ENCODE measurements at regions of chr6 and their contacts with region 1.

Region 1: GRCh38 chr6:31546962-31547726 is at the start of gene NFKBIL1:
- DNase-seq: peak; percentile 92 to 100 (median 94)
- ATAC-seq: peak; percentile 93
- H3K4me3 ChIP-seq: peak within 1 kb of the TSS; percentile 52
- H3K27ac ChIP-seq: peak within 1 kb of the TSS; percentile 81
- H3K4me1 ChIP-seq: peaks cover 10 to 14% of the 10 kb centered on the region in 2 experiments; a peak in 4 of 5 replicates
- H3K27me3 ChIP-seq: no peaks in the 10 kb centered on the region
- CTCF ChIP-seq: no peak; a peak in 1 of 6 replicates
- EP300 ChIP-seq: peak; percentile 37; the same call in 1 of the 2 replicates
- POLR2A ChIP-seq: peak; percentile 71
- RAD21 ChIP-seq: peak in 1 of 2 experiments; percentile 14; a peak in 1 of 4 replicates
- polyA plus RNA-seq, gene NFKBIL1: 0.49 to 0.59 TPM

Region 2: DNA sequence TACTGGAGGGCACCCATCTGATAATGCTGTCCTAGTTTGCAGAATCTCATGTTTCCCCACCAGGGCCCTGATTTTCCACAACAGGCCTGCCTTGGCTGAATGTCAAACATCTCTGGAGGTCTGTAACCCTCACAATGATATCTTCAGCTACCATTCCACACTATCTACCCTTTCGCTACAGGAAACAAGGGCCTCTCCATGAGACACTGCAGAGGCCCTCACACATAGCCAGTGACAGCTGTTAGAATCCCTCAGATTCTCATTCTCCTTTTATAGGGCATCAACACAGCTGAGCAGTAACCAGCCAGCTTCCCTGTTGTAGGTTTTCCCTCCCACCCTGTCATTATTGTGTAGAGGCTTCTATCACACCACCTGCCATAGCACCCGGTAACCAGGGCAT is 78.8 kb before region 1 on chr6:
- CTCF ChIA-PET with region 1: no interaction called
- POLR2A ChIA-PET with region 1: no interaction called
- in situ Hi-C with region 1: no loop called
- intact Hi-C with region 1: no loop called
- DNase-seq: no peak
- ATAC-seq: no peak
- H3K4me3 ChIP-seq: no peak overlapping the region
- H3K27ac ChIP-seq: no peak overlapping the region
- H3K4me1 ChIP-seq: no peaks in the 10 kb centered on the region
- H3K27me3 ChIP-seq: peaks cover 28 to 66% of the 10 kb centered on the region in 2 experiments; a peak in 4 of 5 replicates
- CTCF ChIP-seq: no peak
- EP300 ChIP-seq: no peak
- POLR2A ChIP-seq: no peak
- RAD21 ChIP-seq: no peak

Region 3: GRCh38 chr6:31479933-31480535 is 67.1 kb before region 1 on chr6:
- CTCF ChIA-PET with region 1: no interaction called
- POLR2A ChIA-PET with region 1: no interaction called
- in situ Hi-C with region 1: no loop called
- intact Hi-C with region 1: no loop called
- DNase-seq: no peak
- ATAC-seq: no peak
- H3K4me3 ChIP-seq: no peak overlapping the region
- H3K27ac ChIP-seq: no peak overlapping the region
- H3K4me1 ChIP-seq: no peaks in the 10 kb centered on the region; a peak in 1 of 5 replicates
- H3K27me3 ChIP-seq: peaks cover 30 to 50% of the 10 kb centered on the region in 2 experiments; a peak in 4 of 5 replicates
- CTCF ChIP-seq: no peak
- EP300 ChIP-seq: no peak
- POLR2A ChIP-seq: no peak
- RAD21 ChIP-seq: no peak

Region 4: DNA sequence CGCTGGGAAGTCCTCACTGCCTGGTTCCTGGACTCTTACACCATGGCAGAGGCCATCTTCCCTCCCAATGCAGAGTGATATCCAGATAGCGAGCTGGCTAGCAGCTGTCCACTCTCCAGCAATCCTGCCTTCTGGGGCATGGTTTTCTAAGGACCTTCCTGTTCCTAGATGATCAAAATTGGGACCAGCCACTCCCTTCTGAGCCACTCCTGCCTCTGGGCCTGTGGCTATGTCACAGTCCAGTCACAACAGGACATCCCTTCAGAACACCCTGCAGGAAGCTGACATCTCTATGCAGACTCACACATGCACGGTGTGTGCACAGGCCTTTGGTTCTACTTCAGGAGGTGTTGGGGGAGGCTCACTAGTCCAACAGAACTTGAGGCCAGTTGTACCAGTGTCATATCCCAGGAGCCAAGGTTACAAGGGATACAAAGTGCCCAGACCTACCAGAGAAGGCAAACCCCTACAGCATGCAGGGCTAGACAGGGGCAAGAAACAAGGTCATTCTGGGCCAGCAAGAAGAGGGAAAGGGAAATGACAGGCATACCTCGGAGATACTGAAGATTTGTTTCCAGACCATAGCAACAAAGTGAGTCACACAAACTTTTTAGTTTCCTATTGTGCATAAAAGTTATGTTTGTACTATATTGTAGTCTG is 21.1 kb before region 1 on chr6:
- CTCF ChIA-PET with region 1: no interaction called
- POLR2A ChIA-PET with region 1: interaction called, 27 read pairs
- in situ Hi-C with region 1: no loop called
- intact Hi-C with region 1: no loop called
- DNase-seq: peak in 3 of 4 experiments; percentile 45 to 62 (median 56)
- ATAC-seq: peak; percentile 38
- H3K4me3 ChIP-seq: no peak overlapping the region
- H3K27ac ChIP-seq: peak overlapping the region; percentile 66; the same call in 2 of the 3 replicates
- H3K4me1 ChIP-seq: peaks cover 10 to 20% of the 10 kb centered on the region in 2 experiments
- H3K27me3 ChIP-seq: no peaks in the 10 kb centered on the region
- CTCF ChIP-seq: no peak
- EP300 ChIP-seq: no peak
- POLR2A ChIP-seq: no peak
- RAD21 ChIP-seq: no peak

Region 5: GRCh38 chr6:31559958-31560696 is 13.0 kb after region 1 on chr6:
- CTCF ChIA-PET with region 1: no interaction called
- POLR2A ChIA-PET with region 1: interaction called, 38 read pairs
- in situ Hi-C with region 1: no loop called
- intact Hi-C with region 1: no loop called
- DNase-seq: peak; percentile 66 to 92 (median 76)
- ATAC-seq: peak; percentile 79
- H3K4me3 ChIP-seq: no peak overlapping the region
- H3K27ac ChIP-seq: peak overlapping the region; percentile 41
- H3K4me1 ChIP-seq: peaks cover 47 to 64% of the 10 kb centered on the region in 2 experiments
- H3K27me3 ChIP-seq: no peaks in the 10 kb centered on the region
- CTCF ChIP-seq: peak in 2 of 3 experiments; percentile 23 to 34; a peak in 2 of 6 replicates
- EP300 ChIP-seq: peak; percentile 83
- POLR2A ChIP-seq: no peak
- RAD21 ChIP-seq: peak in 1 of 2 experiments; percentile 16; a peak in 1 of 4 replicates

Region 6: GRCh38 chr6:31580807-31581433 is 33.8 kb after region 1 on chr6:
- CTCF ChIA-PET with region 1: interaction called, 4 read pairs
- POLR2A ChIA-PET with region 1: interaction called, 20 read pairs
- in situ Hi-C with region 1: no loop called
- intact Hi-C with region 1: loop called (anchors 2 kb)
- DNase-seq: peak; percentile 93 to 98 (median 97)
- ATAC-seq: peak; percentile 98
- H3K4me3 ChIP-seq: peak overlapping the region; percentile 62
- H3K27ac ChIP-seq: peak overlapping the region; percentile 45; the same call in 1 of the 3 replicates
- H3K4me1 ChIP-seq: peaks cover 3 to 24% of the 10 kb centered on the region in 2 experiments; a peak in 4 of 5 replicates
- H3K27me3 ChIP-seq: no peaks in the 10 kb centered on the region
- CTCF ChIP-seq: peak; percentile 98 to 99 (median 98)
- EP300 ChIP-seq: peak; percentile 37
- POLR2A ChIP-seq: peak; percentile 81
- RAD21 ChIP-seq: peak; percentile 86 to 88

Region 7: DNA sequence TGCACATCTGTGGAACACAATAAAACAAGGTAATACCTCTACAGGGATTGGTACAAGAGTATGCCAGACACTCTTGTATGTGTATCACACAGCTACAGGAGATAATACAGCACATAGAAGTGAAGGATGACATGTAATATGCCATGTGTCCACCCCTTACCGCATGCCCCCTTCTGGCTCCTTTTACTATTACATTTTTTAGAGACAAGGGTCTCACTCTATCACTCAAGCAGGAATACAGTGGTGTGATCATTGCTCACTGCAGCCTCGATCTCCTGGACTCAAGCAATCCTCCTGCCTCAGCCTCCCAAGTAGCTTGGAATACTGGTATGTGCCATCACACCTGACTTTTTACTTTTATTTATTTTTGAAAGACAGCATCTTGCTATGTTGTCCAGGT is 49.9 kb after region 1 on chr6:
- CTCF ChIA-PET with region 1: interaction called, 78 read pairs
- POLR2A ChIA-PET with region 1: interaction called, 27 read pairs
- in situ Hi-C with region 1: loop called (anchors 5 kb)
- intact Hi-C with region 1: loop called (anchors 1 kb)
- DNase-seq: peak; percentile 72 to 76 (median 74)
- ATAC-seq: peak; percentile 86
- H3K4me3 ChIP-seq: no peak overlapping the region
- H3K27ac ChIP-seq: no peak overlapping the region
- H3K4me1 ChIP-seq: peaks cover 7 to 16% of the 10 kb centered on the region in 2 experiments; a peak in 3 of 5 replicates
- H3K27me3 ChIP-seq: no peaks in the 10 kb centered on the region
- CTCF ChIP-seq: peak; percentile 68 to 81 (median 71)
- EP300 ChIP-seq: no peak
- POLR2A ChIP-seq: no peak
- RAD21 ChIP-seq: peak; percentile 69 to 85

Region 8: DNA sequence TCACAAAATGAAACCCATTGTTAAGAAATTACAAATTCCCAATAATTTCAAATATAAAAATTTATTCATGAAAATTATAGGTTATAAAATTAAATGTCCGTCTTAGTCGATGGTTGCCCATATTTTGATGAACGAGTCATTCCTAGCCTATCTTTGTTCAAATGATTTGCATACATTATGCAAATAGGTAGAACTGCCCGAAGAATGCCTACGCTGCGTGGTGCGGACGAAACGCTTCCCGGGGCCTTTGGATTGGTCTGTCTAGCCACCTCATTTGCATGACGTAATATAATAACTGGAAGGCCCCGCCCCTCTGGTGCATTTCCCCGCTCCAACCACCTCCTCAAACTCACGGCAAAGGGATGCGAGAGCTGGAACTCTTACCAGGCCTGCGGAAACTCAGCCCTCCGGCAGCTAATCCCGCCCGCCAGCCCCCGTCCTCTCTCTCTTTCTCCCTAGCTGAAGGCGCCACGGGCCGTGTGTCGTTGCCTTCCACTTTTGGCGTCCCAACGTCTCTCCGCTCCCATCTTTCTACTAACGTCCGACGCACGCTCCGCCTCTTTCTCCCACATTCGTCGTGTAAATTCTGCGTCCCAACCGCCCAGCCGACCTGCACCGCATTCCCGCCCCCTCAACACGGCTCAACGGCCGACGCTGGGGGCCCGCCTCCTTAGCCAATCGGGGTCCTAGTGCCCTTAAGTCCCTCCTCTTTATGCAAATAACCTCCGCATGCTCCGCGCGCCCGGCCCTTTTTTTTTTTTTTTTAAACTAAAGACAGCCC is 72.9 kb after region 1 on chr6:
- CTCF ChIA-PET with region 1: no interaction called
- POLR2A ChIA-PET with region 1: interaction called, 9 read pairs
- in situ Hi-C with region 1: no loop called
- intact Hi-C with region 1: loop called (anchors 1 kb)
- DNase-seq: peak; percentile 93 to 100 (median 97)
- ATAC-seq: peak; percentile 92
- H3K4me3 ChIP-seq: peak overlapping the region; percentile 96
- H3K27ac ChIP-seq: peak overlapping the region; percentile 98
- H3K4me1 ChIP-seq: peaks cover 28 to 37% of the 10 kb centered on the region in 2 experiments
- H3K27me3 ChIP-seq: no peaks in the 10 kb centered on the region
- CTCF ChIP-seq: no peak; a peak in 1 of 6 replicates
- EP300 ChIP-seq: peak; percentile 71
- POLR2A ChIP-seq: peak; percentile 99
- RAD21 ChIP-seq: peak in 1 of 2 experiments; percentile 18; a peak in 1 of 4 replicates

Region 9: DNA sequence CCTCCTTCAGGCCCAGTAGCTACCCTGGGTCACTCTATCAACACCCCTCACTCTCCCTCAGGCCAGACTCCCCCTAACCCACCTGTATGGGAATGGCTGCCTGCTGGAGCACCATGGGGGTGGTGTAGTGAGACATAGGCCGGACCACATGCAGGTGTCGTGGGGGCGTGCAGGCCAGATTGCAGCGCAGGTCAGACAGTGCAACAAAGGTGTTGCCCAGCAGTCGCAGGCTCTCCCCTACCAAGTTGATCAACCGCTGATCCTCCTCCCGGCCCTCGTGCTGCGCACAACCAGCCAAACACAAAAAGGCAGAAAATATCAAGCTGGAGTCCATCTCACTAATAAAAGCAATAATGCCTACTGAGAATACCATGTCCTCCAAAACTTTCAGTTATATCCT is 98.2 kb after region 1 on chr6:
- CTCF ChIA-PET with region 1: no interaction called
- POLR2A ChIA-PET with region 1: no interaction called
- in situ Hi-C with region 1: no loop called
- intact Hi-C with region 1: no loop called
- DNase-seq: no peak
- ATAC-seq: no peak
- H3K4me3 ChIP-seq: no peak overlapping the region
- H3K27ac ChIP-seq: no peak overlapping the region
- H3K4me1 ChIP-seq: peaks cover 0 to 5% of the 10 kb centered on the region in 2 experiments; a peak in 1 of 5 replicates
- H3K27me3 ChIP-seq: no peaks in the 10 kb centered on the region
- CTCF ChIP-seq: no peak
- EP300 ChIP-seq: no peak
- POLR2A ChIP-seq: no peak
- RAD21 ChIP-seq: no peak

Region 10: GRCh38 chr6:31680840-31681671 is 133.9 kb after region 1 on chr6 and contains the start of gene LY6G5C:
- CTCF ChIA-PET with region 1: no interaction called
- POLR2A ChIA-PET with region 1: no interaction called
- in situ Hi-C with region 1: no loop called
- intact Hi-C with region 1: loop called (anchors 2 kb)
- DNase-seq: peak; percentile 82 to 94 (median 88)
- ATAC-seq: peak; percentile 88
- H3K4me3 ChIP-seq: no peak within 1 kb of the TSS
- H3K27ac ChIP-seq: no peak within 1 kb of the TSS
- H3K4me1 ChIP-seq: peaks cover 10 to 24% of the 10 kb centered on the region in 2 experiments
- H3K27me3 ChIP-seq: no peaks in the 10 kb centered on the region
- CTCF ChIP-seq: peak; percentile 96 to 99 (median 99)
- EP300 ChIP-seq: peak; percentile 39; the same call in 1 of the 2 replicates
- POLR2A ChIP-seq: no peak
- RAD21 ChIP-seq: peak; percentile 99 to 100
- polyA plus RNA-seq, gene LY6G5C: 0.10 TPM in 1 of 2 experiments, not detected in the other

Measured in K562 (cell line).